CD8-positive, alpha-beta T cell (primary cell): ENCODE measurements at regions of chr7 and their contacts with region 1.

Region 1: GRCh38 chr7:152894273-152895170 is 135.0 kb downstream of the ACTR3B start:
- DNase-seq: peak in 3 of 9 experiments; percentile 15 to 48 (median 20)
- ATAC-seq: no peak
- H3K4me3 ChIP-seq: no peak overlapping the region
- H3K4me3 Mint-ChIP-seq: no peak overlapping the region
- H3K27ac ChIP-seq: no peak overlapping the region
- H3K27ac Mint-ChIP-seq: no peak overlapping the region
- H3K4me1 ChIP-seq: peaks cover 3% of the 10 kb centered on the region
- H3K4me1 Mint-ChIP-seq: peaks cover 2% of the 10 kb centered on the region
- H3K27me3 ChIP-seq: no peaks in the 10 kb centered on the region
- H3K27me3 Mint-ChIP-seq: peaks cover 7% of the 10 kb centered on the region
- CTCF ChIP-seq: peak; percentile 59

Region 2: GRCh38 chr7:152780935-152781334 is 113.6 kb before region 1 on chr7:
- CTCF ChIA-PET with region 1: no interaction called
- POLR2A ChIA-PET with region 1: no interaction called
- intact Hi-C with region 1: no loop called
- DNase-seq: no peak
- ATAC-seq: no peak
- H3K4me3 ChIP-seq: no peak overlapping the region
- H3K4me3 Mint-ChIP-seq: no peak overlapping the region
- H3K27ac ChIP-seq: no peak overlapping the region
- H3K27ac Mint-ChIP-seq: no peak overlapping the region
- H3K4me1 ChIP-seq: no peaks in the 10 kb centered on the region
- H3K4me1 Mint-ChIP-seq: peaks cover 2% of the 10 kb centered on the region
- H3K27me3 ChIP-seq: no peaks in the 10 kb centered on the region
- H3K27me3 Mint-ChIP-seq: no peaks in the 10 kb centered on the region
- CTCF ChIP-seq: no peak

Region 3: DNA sequence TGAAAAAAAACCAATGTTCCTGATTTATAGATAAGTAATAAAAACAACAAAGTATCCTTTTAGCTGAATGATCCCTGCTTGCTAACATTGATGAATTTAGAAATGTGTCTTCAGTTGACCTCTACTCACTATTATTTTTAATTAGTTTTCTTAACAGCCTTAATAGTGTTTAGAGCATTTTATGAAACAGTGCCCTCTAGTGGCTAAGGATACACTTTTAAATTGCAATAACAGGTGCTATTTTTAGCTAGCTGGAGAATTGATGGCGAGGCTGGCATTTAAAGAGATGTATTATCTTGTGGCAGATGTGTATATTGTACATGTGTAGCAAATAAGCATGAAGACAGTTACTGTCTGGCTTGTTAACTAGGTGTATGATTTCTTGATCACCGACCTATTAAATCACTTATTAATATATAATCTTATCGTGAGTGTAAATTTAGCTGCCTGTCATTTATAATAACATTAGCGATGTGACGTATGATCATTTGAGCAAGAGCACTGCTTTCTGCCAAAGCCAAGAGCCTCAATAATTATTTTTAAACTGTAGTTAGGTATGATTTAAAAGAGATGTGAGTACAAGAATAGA is 1609.5 kb after region 1 on chr7:
- CTCF ChIA-PET with region 1: no interaction called
- POLR2A ChIA-PET with region 1: no interaction called
- intact Hi-C with region 1: loop called in 1 of 2 experiments (anchors 10 kb)
- DNase-seq: peak in 2 of 9 experiments; percentile 13 to 24
- ATAC-seq: no peak
- H3K4me3 ChIP-seq: no peak overlapping the region
- H3K4me3 Mint-ChIP-seq: no peak overlapping the region
- H3K27ac ChIP-seq: no peak overlapping the region
- H3K27ac Mint-ChIP-seq: no peak overlapping the region
- H3K4me1 ChIP-seq: no peaks in the 10 kb centered on the region
- H3K4me1 Mint-ChIP-seq: no peaks in the 10 kb centered on the region
- H3K27me3 ChIP-seq: no peaks in the 10 kb centered on the region
- H3K27me3 Mint-ChIP-seq: no peaks in the 10 kb centered on the region
- CTCF ChIP-seq: peak; percentile 60